Esophagus muscularis mucosa (tissue), 4 donors: ENCODE measurements at regions of chr10 and their contacts with region 1.

Region 1: GRCh38 chr10:4498711-4499251 is 327.2 kb upstream of the AKR1E2 start:
- DNase-seq: no peak
- H3K4me3 ChIP-seq: peak overlapping the region in 1 of 4 donors; percentile 0
- H3K27ac ChIP-seq: peak overlapping the region; percentile 83 to 88 (median 86)
- H3K4me1 ChIP-seq: peaks cover 7 to 42% (median 35%) of the 10 kb centered on the region in 4 donors
- H3K27me3 ChIP-seq: no peaks in the 10 kb centered on the region
- CTCF ChIP-seq: no peak
- EP300 ChIP-seq: no peak
- POLR2A ChIP-seq: no peak

Region 2: GRCh38 chr10:4241724-4242345 is 256.9 kb before region 1 on chr10:
- intact Hi-C with region 1: loop called (anchors 5 kb)
- DNase-seq: no peak
- H3K4me3 ChIP-seq: peak overlapping the region; percentile 46 to 60 (median 58)
- H3K27ac ChIP-seq: peak overlapping the region; percentile 89 to 92 (median 90)
- H3K4me1 ChIP-seq: peaks cover 7 to 70% (median 41%) of the 10 kb centered on the region in 4 donors
- H3K27me3 ChIP-seq: no peaks in the 10 kb centered on the region
- CTCF ChIP-seq: no peak
- EP300 ChIP-seq: peak; percentile 77
- POLR2A ChIP-seq: no peak